Mucosa of descending colon (tissue), 3 donors: ENCODE measurements at regions of chr17 and their contacts with region 1.

Region 1: DNA sequence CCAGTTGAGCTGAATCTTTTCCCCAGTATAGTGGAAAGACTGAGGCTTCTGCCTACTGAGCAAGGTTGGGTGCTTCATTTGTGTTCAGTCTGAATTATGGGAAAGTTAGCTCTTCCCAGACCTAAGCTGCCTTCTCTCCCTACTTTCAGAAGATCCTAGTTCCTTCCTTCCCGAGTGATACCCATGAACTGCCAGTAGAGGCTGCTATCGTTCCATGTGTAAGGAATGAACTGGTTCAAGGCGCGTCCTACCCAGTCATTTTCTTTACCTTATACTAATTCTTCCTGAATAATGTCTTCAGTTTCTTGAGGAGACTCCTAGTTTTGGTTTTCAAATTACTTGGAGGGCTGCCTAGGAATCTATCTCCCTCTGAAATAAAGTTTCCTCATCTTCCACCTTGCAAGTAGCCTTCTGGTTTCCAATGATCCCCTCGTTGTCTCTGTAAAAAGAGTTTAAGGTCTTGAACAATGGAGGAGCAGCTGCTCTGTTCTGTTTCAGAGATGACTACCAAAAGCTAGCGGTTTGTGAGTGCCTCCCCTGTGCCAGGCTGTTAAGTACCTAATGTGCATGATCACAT is 934 bp upstream of the AOC2 start:
- DNase-seq: peak in 1 of 3 donors; percentile 48
- ATAC-seq: peak; percentile 85
- H3K4me3 ChIP-seq: no peak overlapping the region
- H3K4me1 ChIP-seq: no peaks in the 10 kb centered on the region
- CTCF ChIP-seq: peak; percentile 62

Region 2: GRCh38 chr17:42554250-42555121 is 289.0 kb before region 1 on chr17:
- intact Hi-C with region 1: no loop called
- DNase-seq: peak; percentile 88 to 93 (median 92)
- ATAC-seq: peak; percentile 92
- H3K4me3 ChIP-seq: peak overlapping the region; percentile 72
- H3K4me1 ChIP-seq: peaks cover 25% of the 10 kb centered on the region
- CTCF ChIP-seq: no peak

Region 3: DNA sequence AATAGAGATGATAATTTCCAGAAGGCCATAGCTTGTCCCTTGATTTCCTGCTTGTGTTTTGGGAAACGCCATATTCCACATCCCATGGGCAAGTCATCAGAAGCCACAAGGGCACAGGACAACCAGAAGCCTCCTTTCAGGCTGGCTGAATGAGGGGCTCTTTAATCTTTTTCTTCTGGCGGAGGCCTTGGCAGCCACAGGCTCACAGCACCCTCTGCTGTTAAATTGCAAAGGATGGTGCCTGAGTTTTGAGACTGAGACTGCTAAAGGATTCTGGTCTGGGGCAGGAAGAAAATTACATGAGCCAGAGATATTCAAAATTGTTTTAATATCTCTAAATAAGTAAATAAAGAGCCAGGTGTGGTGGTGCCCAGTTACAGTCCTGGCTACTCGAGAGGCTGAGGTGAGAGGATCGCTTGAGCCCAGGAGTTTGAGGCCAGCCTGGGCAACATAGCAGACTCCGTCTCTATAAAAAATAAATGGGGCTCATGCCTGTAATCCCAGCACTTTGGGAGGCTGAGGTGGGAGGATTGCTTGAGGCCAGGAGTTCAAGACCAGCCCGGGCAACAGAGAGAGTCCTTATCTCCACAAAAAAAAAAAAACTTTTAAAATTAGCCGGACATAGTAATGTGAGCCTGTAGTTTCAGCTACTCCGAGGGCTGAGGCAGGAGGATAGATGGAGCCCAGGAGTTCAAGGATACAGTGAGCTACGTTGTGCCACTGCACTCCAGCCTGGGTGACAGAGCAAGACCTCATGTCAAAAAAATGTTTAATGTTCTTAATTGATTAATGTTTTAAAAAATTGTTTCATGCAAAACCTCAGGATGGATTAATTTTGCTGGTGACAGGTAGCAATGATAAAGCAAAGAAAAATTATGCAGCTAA is 94.5 kb after region 1 on chr17:
- intact Hi-C with region 1: loop called (anchors 5 kb)
- DNase-seq: peak in 2 of 3 donors; percentile 32 to 50
- ATAC-seq: peak; percentile 62
- H3K4me3 ChIP-seq: no peak overlapping the region
- H3K4me1 ChIP-seq: no peaks in the 10 kb centered on the region
- CTCF ChIP-seq: no peak